ENCODE measurements at regions of chr2 and their contacts with region 1.

Region 1: GRCh38 chr2:38665854-38666555 is at the start of gene GALM:
- DNase-seq: peak; percentile 74
- ATAC-seq: peak; percentile 37
- H3K4me3 Mint-ChIP-seq: peak within 1 kb of the TSS; percentile 79
- H3K27ac Mint-ChIP-seq: peak within 1 kb of the TSS; percentile 98
- H3K4me1 Mint-ChIP-seq: peaks cover 59% of the 10 kb centered on the region
- H3K27me3 Mint-ChIP-seq: no peaks in the 10 kb centered on the region
- CTCF ChIP-seq: no peak
- total RNA-seq, gene GALM: 38.3 to 40.6 TPM

Region 2: GRCh38 chr2:38648107-38648761 is 17.8 kb before region 1 on chr2:
- CTCF ChIA-PET with region 1: interaction called, 48 read pairs
- POLR2A ChIA-PET with region 1: interaction called, 124 read pairs
- intact Hi-C with region 1: loop called (anchors 1 kb)
- DNase-seq: no peak
- ATAC-seq: no peak
- H3K4me3 Mint-ChIP-seq: no peak overlapping the region
- H3K27ac Mint-ChIP-seq: peak overlapping the region; percentile 33
- H3K4me1 Mint-ChIP-seq: peaks cover 38% of the 10 kb centered on the region
- H3K27me3 Mint-ChIP-seq: no peaks in the 10 kb centered on the region
- CTCF ChIP-seq: no peak

Region 3: DNA sequence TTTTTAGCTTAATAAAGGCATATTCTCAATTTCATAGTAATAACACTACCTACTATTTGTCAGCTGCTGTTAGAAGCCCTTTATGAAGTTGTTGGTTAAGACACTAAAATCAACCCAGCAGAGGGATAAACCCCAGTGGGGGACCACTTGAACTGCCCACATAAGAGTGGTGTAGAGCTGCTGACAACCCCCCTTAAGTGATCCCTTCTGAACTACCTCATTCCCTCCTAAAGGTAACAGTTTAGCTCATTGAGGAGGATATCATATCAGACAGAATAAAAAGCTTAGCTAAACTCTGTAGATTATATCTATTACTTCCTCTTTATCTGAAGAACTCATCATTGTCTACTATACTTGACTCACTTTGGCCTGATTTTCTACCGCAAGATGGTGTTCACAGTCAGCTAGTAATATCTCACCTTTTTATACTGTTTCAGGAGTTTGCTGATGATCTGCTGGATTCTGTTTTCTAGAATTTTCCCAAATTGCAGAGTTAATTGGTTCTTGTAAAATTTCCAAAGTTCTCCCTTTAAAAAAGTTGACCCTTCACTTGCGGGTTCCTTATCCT is 16.1 kb after region 1 on chr2:
- CTCF ChIA-PET with region 1: interaction called, 14 read pairs
- POLR2A ChIA-PET with region 1: interaction called, 10 read pairs
- intact Hi-C with region 1: no loop called
- DNase-seq: no peak
- ATAC-seq: peak; percentile 60
- H3K4me3 Mint-ChIP-seq: peak overlapping the region; percentile 22
- H3K27ac Mint-ChIP-seq: peak overlapping the region; percentile 75
- H3K4me1 Mint-ChIP-seq: peaks cover 37% of the 10 kb centered on the region
- H3K27me3 Mint-ChIP-seq: no peaks in the 10 kb centered on the region
- CTCF ChIP-seq: no peak

Region 4: GRCh38 chr2:38720613-38721241 is 54.7 kb after region 1 on chr2:
- CTCF ChIA-PET with region 1: interaction called, 13 read pairs
- POLR2A ChIA-PET with region 1: interaction called, 29 read pairs
- intact Hi-C with region 1: loop called (anchors 1 kb)
- DNase-seq: peak; percentile 42
- ATAC-seq: no peak
- H3K4me3 Mint-ChIP-seq: peak overlapping the region; percentile 39
- H3K27ac Mint-ChIP-seq: peak overlapping the region; percentile 92
- H3K4me1 Mint-ChIP-seq: peaks cover 62% of the 10 kb centered on the region
- H3K27me3 Mint-ChIP-seq: no peaks in the 10 kb centered on the region
- CTCF ChIP-seq: no peak

Region 5: DNA sequence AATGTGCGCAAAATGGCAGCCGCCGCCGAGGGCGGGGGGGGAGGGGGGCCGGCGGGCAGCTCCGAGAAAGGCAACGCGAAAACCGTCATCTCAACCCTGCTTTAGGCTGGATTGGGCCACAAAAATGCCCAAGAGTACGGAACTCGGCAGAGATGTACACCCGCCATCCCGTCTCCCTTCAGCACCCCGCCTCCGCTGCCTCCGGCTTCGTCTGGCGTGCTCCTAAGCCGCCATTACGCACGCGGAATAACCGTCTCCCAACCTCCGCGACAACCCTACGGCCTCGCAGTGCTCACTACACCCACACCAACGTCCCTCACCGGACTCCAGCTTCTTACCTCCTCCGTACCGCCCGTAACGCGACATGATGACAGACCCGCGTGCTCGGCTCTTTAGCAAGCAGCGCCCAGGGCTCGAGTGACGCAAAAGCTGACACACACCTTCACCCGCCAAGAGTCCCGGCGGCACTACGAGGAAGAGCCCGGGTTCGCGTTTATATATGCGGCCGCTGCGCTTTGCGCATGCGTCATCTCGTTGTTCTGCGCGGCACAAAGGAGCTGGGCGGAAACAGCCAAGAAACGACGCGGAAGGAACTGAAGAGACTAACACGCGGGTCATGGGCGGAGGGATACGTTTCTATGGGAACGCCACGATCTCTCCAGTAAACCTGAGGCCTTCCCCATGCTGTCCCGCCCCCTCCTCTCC is 85.0 kb after region 1 on chr2 and contains the start of gene SRSF7:
- CTCF ChIA-PET with region 1: no interaction called
- POLR2A ChIA-PET with region 1: interaction called, 24 read pairs
- intact Hi-C with region 1: no loop called
- DNase-seq: peak; percentile 98
- ATAC-seq: peak; percentile 81
- H3K4me3 Mint-ChIP-seq: peak within 1 kb of the TSS; percentile 95
- H3K27ac Mint-ChIP-seq: peak within 1 kb of the TSS; percentile 100
- H3K4me1 Mint-ChIP-seq: peaks cover 44% of the 10 kb centered on the region
- H3K27me3 Mint-ChIP-seq: peaks cover 3% of the 10 kb centered on the region
- CTCF ChIP-seq: no peak
- total RNA-seq, gene SRSF7: 320 to 333 TPM